HEK293 (cell line): ENCODE measurements at regions of chr7 and their contacts with region 1.

Region 1: GRCh38 chr7:90155206-90155605 is 937 bp downstream of the STEAP1 start:
- H3K4me3 ChIP-seq: no peak overlapping the region
- H3K27ac ChIP-seq: no peak overlapping the region
- H3K4me1 ChIP-seq: no peaks in the 10 kb centered on the region
- CTCF ChIP-seq: no peak

Region 2: GRCh38 chr7:90211391-90212148 is 56.4 kb after region 1 on chr7 and contains the start of gene STEAP2:
- CTCF ChIA-PET with region 1: interaction called, 12 read pairs
- POLR2A ChIA-PET with region 1: interaction called, 4 read pairs
- H3K4me3 ChIP-seq: peak within 1 kb of the TSS; percentile 71
- H3K27ac ChIP-seq: peak within 1 kb of the TSS; percentile 88
- H3K4me1 ChIP-seq: peaks cover 30% of the 10 kb centered on the region
- CTCF ChIP-seq: peak; percentile 95

Region 3: GRCh38 chr7:90248706-90249105 is 93.5 kb after region 1 on chr7:
- CTCF ChIA-PET with region 1: interaction called, 10 read pairs
- POLR2A ChIA-PET with region 1: no interaction called
- H3K4me3 ChIP-seq: no peak overlapping the region
- H3K27ac ChIP-seq: no peak overlapping the region
- H3K4me1 ChIP-seq: no peaks in the 10 kb centered on the region; the same call in 1 of the 2 replicates
- CTCF ChIP-seq: no peak

Region 4: DNA sequence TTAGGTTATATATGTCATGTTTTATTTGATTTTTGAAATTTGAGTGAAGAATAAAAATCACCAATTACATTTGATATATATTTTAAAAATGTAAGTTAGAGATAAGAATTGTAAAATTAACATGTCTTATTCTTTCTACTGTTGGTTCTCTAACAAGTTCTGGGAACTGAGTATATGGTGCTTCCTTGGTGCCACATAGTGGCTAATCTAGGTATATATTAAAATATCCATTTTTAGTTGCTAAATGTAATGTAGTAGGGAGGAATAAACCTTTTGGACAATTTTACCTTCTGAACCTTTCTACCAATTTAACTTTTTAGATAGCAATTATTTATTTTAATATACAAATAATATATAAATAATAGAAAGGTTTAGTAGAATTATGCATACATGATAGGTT is 107.2 kb after region 1 on chr7:
- CTCF ChIA-PET with region 1: interaction called, 16 read pairs
- POLR2A ChIA-PET with region 1: no interaction called
- H3K4me3 ChIP-seq: no peak overlapping the region
- H3K27ac ChIP-seq: no peak overlapping the region
- H3K4me1 ChIP-seq: no peaks in the 10 kb centered on the region
- CTCF ChIP-seq: no peak

Region 5: DNA sequence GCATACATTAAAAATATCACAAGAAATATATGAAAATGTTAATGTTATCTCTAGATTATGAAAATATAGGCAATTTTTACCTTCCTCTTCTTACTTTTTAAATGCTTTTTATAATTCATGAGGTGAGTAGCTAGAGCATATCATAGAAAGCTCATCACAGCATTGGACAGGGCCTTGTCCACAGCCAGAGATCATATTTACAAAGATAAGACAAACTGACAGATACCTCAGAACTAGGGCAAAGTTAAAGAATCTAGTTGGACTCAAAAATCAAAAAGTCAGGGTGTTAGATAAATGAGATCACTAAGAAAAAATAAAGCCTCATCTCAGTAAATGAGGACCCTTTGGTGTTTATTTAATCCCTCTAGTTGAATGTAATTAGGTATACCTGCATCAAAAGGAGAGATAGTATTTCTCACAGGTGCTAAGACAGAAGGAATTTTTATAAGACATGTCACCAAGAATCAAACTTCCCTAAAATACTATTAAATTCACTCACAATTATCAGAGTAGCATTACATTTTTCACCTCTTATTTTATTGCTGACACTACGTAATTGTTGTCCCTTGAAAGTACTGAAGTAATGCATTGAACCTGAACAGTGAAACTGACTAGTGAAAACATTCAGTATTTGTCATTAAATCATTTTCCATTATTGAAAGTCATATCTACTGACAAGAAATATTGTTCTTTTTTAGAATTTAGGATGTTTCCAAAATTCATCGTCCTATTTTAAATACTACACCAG is 115.4 kb after region 1 on chr7:
- CTCF ChIA-PET with region 1: interaction called, 10 read pairs
- POLR2A ChIA-PET with region 1: no interaction called
- H3K4me3 ChIP-seq: no peak overlapping the region
- H3K27ac ChIP-seq: no peak overlapping the region
- H3K4me1 ChIP-seq: no peaks in the 10 kb centered on the region
- CTCF ChIP-seq: no peak

Region 6: GRCh38 chr7:90424720-90425119 is 269.5 kb after region 1 on chr7:
- CTCF ChIA-PET with region 1: interaction called, 25 read pairs
- POLR2A ChIA-PET with region 1: no interaction called
- H3K4me3 ChIP-seq: no peak overlapping the region
- H3K27ac ChIP-seq: no peak overlapping the region
- H3K4me1 ChIP-seq: no peaks in the 10 kb centered on the region
- CTCF ChIP-seq: no peak